ENCODE measurements at regions of chr6 and their contacts with region 1.

Region 1: GRCh38 chr6:163956571-163957407 is 542.3 kb downstream of the QKI start:
- DNase-seq: peak; percentile 81
- H3K4me3 ChIP-seq: no peak overlapping the region
- H3K27ac ChIP-seq: peak overlapping the region; percentile 95
- H3K4me1 ChIP-seq: peaks cover 61% of the 10 kb centered on the region
- H3K27me3 ChIP-seq: no peaks in the 10 kb centered on the region
- CTCF ChIP-seq: peak; percentile 94

Region 2: DNA sequence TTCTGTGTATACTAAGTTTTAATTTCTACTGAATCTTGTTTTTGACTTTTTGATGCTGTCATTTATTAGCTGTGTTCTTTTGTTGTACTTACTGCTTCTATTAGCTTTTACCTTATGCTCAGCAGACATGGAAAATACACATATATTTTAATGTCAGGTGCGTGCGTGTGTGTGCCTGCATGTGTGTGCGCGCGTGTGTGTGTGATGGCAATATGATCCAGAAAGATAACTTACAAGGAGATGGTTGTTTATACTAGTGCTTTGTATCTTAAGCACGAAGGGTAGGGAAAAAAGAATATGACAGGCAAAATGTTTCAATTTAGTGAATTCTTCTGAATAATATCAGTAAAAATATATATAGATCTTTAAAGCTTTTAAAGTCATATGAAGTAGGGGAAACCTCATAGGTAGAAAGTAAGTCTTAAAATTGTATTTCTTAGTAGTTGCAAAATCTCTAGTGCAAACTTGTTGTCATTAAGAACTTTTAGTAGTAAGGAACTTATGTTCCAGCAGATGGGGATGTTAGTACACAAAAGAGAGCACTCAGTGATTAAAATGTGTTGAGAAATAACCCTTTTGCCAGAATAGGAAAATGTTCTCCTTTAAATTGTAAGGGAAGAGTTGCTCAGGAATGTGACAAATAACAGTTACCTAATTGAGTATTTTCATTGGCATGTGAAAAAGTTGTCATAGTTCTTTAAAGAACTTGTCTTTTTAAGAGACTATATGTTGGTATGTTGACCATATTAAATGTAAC is 529.1 kb before region 1 on chr6:
- intact Hi-C with region 1: loop called (anchors 10 kb)
- DNase-seq: no peak
- H3K4me3 ChIP-seq: peak overlapping the region; percentile 34
- H3K27ac ChIP-seq: peak overlapping the region; percentile 24
- H3K4me1 ChIP-seq: peaks cover 100% of the 10 kb centered on the region
- H3K27me3 ChIP-seq: no peaks in the 10 kb centered on the region
- CTCF ChIP-seq: peak; percentile 52

Region 3: GRCh38 chr6:163579880-163580295 is 376.9 kb before region 1 on chr6:
- intact Hi-C with region 1: loop called (anchors 10 kb)
- DNase-seq: no peak
- H3K4me3 ChIP-seq: no peak overlapping the region
- H3K27ac ChIP-seq: peak overlapping the region; percentile 54
- H3K4me1 ChIP-seq: peaks cover 49% of the 10 kb centered on the region
- H3K27me3 ChIP-seq: no peaks in the 10 kb centered on the region
- CTCF ChIP-seq: no peak

Region 4: GRCh38 chr6:163711615-163712565 is 244.9 kb before region 1 on chr6:
- intact Hi-C with region 1: loop called (anchors 5 kb)
- DNase-seq: peak; percentile 89
- H3K4me3 ChIP-seq: no peak overlapping the region
- H3K27ac ChIP-seq: peak overlapping the region; percentile 91
- H3K4me1 ChIP-seq: peaks cover 62% of the 10 kb centered on the region
- H3K27me3 ChIP-seq: no peaks in the 10 kb centered on the region
- CTCF ChIP-seq: peak; percentile 60

Measured in left ventricle myocardium inferior (tissue), 1 donor.